Panc1 (cell line): ENCODE measurements at regions of chr10 and their contacts with region 1.

Region 1: GRCh38 chr10:124085680-124086079 is 7.7 kb downstream of the CHST15 start:
- DNase-seq: no peak
- ATAC-seq: 0 out of 2 replicates have a peak, but pooled peaks have one; percentile 20
- H3K4me3 ChIP-seq: no peak overlapping the region
- H3K27ac ChIP-seq: no peak overlapping the region; the same call in 1 of the 2 replicates
- H3K4me1 ChIP-seq: peaks cover 29% of the 10 kb centered on the region
- H3K27me3 ChIP-seq: no peaks in the 10 kb centered on the region
- CTCF ChIP-seq: no peak

Region 2: GRCh38 chr10:124125447-124126116 is 39.9 kb after region 1 on chr10:
- CTCF ChIA-PET with region 1: no interaction called
- POLR2A ChIA-PET with region 1: interaction called, 11 read pairs
- in situ Hi-C with region 1: no loop called
- intact Hi-C with region 1: no loop called
- DNase-seq: no peak
- ATAC-seq: peak; percentile 62
- H3K4me3 ChIP-seq: no peak overlapping the region
- H3K27ac ChIP-seq: no peak overlapping the region
- H3K4me1 ChIP-seq: no peaks in the 10 kb centered on the region
- H3K27me3 ChIP-seq: no peaks in the 10 kb centered on the region
- CTCF ChIP-seq: peak; percentile 76; the same call in 1 of the 2 replicates